K562 (cell line): ENCODE measurements at regions of chr5 and their contacts with region 1.

Region 1: DNA sequence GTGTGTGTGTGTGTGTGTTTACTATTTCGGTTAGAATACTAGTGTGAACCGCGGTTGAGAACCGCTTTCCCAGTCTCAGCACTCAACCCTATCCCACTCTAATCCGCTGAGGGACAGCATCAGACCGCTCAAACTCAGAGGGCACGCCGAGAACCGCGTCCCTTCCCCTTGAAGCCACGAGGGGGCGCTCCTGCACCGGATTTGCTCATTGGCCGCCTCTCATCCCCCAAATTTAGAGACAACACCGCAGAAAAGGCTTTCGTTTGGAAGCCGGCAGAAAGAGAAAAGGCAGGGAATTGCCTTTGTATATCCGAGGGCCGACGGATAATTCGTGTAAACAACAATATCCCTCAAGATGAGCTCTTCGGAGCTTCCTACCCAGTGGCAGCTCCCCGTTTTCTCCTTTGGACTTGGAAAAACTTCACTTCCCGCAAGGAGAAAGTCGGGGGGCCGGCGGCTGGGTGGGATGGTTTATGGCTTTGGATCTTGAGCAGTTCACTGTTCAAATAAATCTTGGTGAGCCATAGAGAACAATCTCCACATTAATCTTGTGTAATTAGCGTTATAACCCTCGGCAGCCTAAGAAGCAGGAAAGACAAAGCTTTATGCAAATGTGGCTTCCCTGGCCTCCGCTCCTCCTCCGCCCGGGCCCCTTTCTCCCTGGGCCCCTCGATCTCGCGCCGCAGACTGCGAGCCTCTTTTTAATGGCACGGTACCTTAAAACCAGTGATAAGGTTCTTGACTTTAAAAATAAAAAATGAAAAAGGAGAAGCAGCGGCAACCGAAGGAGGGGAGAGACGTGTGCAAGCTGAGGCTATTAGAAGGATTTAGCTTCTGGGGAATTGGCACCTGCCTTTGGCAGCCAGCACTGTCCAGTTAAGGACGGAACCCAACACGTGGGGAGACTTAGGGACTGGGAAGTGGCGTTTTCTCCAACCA is 296.8 kb downstream of the PARP8 start:
- DNase-seq: peak; percentile 83 to 89 (median 87)
- ATAC-seq: peak; percentile 97
- H3K4me3 ChIP-seq: 0 out of 2 replicates have a peak overlapping the region, but pooled peaks have one; percentile 9
- H3K27ac ChIP-seq: no peak overlapping the region
- H3K4me1 ChIP-seq: peaks cover 0 to 5% of the 10 kb centered on the region in 2 experiments; a peak in 1 of 5 replicates
- H3K27me3 ChIP-seq: peaks cover 6 to 18% of the 10 kb centered on the region in 2 experiments; a peak in 3 of 5 replicates
- CTCF ChIP-seq: peak; percentile 99
- EP300 ChIP-seq: no peak
- POLR2A ChIP-seq: no peak
- RAD21 ChIP-seq: peak; percentile 92 to 98

Region 2: DNA sequence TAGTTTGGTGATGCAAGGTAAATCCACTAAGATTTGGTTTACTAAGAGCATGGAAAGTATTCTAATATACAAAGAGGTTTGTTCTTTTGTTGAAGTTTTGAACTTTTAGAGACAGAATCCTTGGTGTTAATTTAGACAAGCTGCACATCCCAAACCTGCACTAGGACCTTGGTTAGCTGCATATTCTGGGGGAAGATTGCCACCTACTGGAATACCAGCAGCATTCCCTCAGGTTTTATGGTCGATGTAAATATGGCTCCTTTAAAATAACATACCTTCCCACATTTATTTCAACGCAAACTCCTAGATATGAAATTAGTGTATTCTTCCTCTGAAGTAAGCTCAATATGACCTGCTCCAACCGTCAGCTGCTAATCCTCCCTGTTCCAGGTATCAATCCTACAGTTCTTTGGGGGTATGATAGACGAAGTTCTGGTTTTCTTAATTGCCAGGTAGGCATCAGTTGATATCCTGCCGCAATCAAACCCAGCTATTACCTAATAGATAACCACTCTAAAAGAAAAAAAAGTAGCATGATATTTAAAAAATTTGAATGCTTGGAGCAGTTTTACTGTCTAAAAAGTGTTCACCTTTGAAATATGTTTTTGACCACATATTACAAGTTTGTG is 1044.1 kb after region 1 on chr5:
- CTCF ChIA-PET with region 1: no interaction called
- POLR2A ChIA-PET with region 1: no interaction called
- in situ Hi-C with region 1: loop called (anchors 25 kb)
- intact Hi-C with region 1: loop called (anchors 2 kb)
- DNase-seq: peak in 2 of 4 experiments; percentile 4 to 10
- ATAC-seq: no peak
- H3K4me3 ChIP-seq: no peak overlapping the region
- H3K27ac ChIP-seq: no peak overlapping the region
- H3K4me1 ChIP-seq: no peaks in the 10 kb centered on the region
- H3K27me3 ChIP-seq: no peaks in the 10 kb centered on the region
- CTCF ChIP-seq: peak in 2 of 3 experiments; percentile 32 to 44; a peak in 4 of 6 replicates
- EP300 ChIP-seq: no peak
- POLR2A ChIP-seq: no peak
- RAD21 ChIP-seq: peak; percentile 60

Region 3: GRCh38 chr5:52657247-52657645 is 1694.0 kb after region 1 on chr5:
- CTCF ChIA-PET with region 1: interaction called, 7 read pairs
- POLR2A ChIA-PET with region 1: no interaction called
- in situ Hi-C with region 1: loop called (anchors 10 kb)
- intact Hi-C with region 1: loop called (anchors 1 kb)
- DNase-seq: peak; percentile 10 to 22 (median 16)
- ATAC-seq: no peak
- H3K4me3 ChIP-seq: no peak overlapping the region
- H3K27ac ChIP-seq: no peak overlapping the region
- H3K4me1 ChIP-seq: no peaks in the 10 kb centered on the region
- H3K27me3 ChIP-seq: no peaks in the 10 kb centered on the region
- CTCF ChIP-seq: peak in 2 of 3 experiments; percentile 26 to 49; a peak in 3 of 6 replicates
- EP300 ChIP-seq: no peak
- POLR2A ChIP-seq: no peak
- RAD21 ChIP-seq: peak; percentile 54 to 67

Region 4: DNA sequence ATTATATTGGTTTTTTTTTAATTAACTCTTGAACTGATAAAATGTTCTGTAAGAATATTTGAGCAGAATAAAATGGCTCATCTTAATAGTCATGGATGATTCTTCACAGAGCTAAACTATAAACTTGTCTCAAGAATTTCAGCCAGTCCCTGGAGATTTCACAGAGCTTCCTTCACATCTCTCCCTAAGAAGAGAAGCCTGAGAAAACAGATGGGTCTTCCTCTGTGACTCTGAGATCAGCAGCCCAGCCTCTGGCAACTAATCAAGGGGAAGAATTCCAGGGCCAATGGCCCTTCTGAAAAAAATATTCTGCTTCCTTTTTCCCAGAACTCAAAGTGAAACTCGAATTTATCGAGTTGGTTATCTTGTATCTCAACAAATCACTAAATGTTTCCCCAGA is 1702.4 kb after region 1 on chr5:
- CTCF ChIA-PET with region 1: no interaction called
- POLR2A ChIA-PET with region 1: no interaction called
- in situ Hi-C with region 1: loop called (anchors 10 kb)
- intact Hi-C with region 1: no loop called
- DNase-seq: no peak
- ATAC-seq: no peak
- H3K4me3 ChIP-seq: no peak overlapping the region
- H3K27ac ChIP-seq: no peak overlapping the region
- H3K4me1 ChIP-seq: no peaks in the 10 kb centered on the region
- H3K27me3 ChIP-seq: no peaks in the 10 kb centered on the region
- CTCF ChIP-seq: no peak
- EP300 ChIP-seq: no peak
- POLR2A ChIP-seq: no peak
- RAD21 ChIP-seq: no peak

Region 5: GRCh38 chr5:52915176-52915875 is 1952.1 kb after region 1 on chr5:
- CTCF ChIA-PET with region 1: no interaction called
- POLR2A ChIA-PET with region 1: no interaction called
- in situ Hi-C with region 1: no loop called
- intact Hi-C with region 1: loop called (anchors 5 kb)
- DNase-seq: peak; percentile 50 to 65 (median 59)
- ATAC-seq: peak; percentile 95
- H3K4me3 ChIP-seq: no peak overlapping the region
- H3K27ac ChIP-seq: no peak overlapping the region
- H3K4me1 ChIP-seq: no peaks in the 10 kb centered on the region
- H3K27me3 ChIP-seq: no peaks in the 10 kb centered on the region
- CTCF ChIP-seq: peak; percentile 65 to 80 (median 69)
- EP300 ChIP-seq: no peak
- POLR2A ChIP-seq: no peak
- RAD21 ChIP-seq: peak; percentile 51 to 69